T-cell (primary cell): ENCODE measurements at regions of chr6 and their contacts with region 1.

Region 1: GRCh38 chr6:168956884-168957730 is 296.5 kb downstream of the THBS2 start:
- DNase-seq: peak in 29 of 35 experiments; percentile 11 to 59 (median 36)
- ATAC-seq: peak in 2 of 4 experiments; percentile 46 to 51
- H3K4me3 ChIP-seq: no peak overlapping the region
- H3K4me3 Mint-ChIP-seq: no peak overlapping the region
- H3K27ac ChIP-seq: no peak overlapping the region
- H3K27ac Mint-ChIP-seq: no peak overlapping the region
- H3K4me1 ChIP-seq: no peaks in the 10 kb centered on the region
- H3K4me1 Mint-ChIP-seq: no peaks in the 10 kb centered on the region
- H3K27me3 ChIP-seq: peaks cover 0 to 10% of the 10 kb centered on the region in 2 experiments
- H3K27me3 Mint-ChIP-seq: peaks cover 22 to 25% of the 10 kb centered on the region in 2 donors

Region 2: DNA sequence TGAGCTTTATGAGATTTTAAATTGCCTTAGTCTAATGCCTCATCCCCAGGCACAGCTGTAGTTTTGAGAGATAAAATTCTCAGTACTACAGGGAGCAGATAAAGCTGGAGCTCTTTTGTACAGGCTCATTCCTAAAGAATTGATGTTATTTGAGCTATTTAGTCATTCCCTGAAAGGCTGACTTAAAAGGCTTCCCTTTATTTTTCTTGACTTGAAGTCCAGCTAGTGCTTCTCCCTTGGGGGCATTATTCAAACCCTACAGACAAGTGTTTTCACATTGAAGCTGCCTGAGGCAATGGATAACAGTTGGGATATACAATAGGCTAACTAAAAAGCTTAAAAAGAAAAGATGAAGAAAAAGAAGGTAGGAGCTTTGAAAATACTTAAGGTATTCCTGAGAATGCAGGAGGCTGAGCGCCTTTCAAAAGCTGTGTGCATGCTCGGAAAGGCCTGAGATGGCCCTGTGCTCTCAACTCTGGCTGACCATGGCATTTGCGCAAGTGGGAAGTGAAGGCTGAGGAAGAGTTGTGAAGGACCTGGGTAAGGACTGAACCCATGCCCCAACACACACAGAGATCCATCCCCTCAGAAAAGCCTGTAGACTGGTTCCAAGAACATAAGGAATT is 201.0 kb before region 1 on chr6:
- CTCF ChIA-PET with region 1: no interaction called
- POLR2A ChIA-PET with region 1: no interaction called
- DNase-seq: no peak
- ATAC-seq: no peak
- H3K4me3 ChIP-seq: no peak overlapping the region
- H3K4me3 Mint-ChIP-seq: no peak overlapping the region
- H3K27ac ChIP-seq: no peak overlapping the region
- H3K27ac Mint-ChIP-seq: no peak overlapping the region
- H3K4me1 ChIP-seq: no peaks in the 10 kb centered on the region
- H3K4me1 Mint-ChIP-seq: no peaks in the 10 kb centered on the region
- H3K27me3 ChIP-seq: peaks cover 0 to 4% of the 10 kb centered on the region in 2 experiments
- H3K27me3 Mint-ChIP-seq: peaks cover 7 to 18% of the 10 kb centered on the region in 2 donors

Region 3: GRCh38 chr6:169215201-169215681 is 258.1 kb after region 1 on chr6:
- CTCF ChIA-PET with region 1: interaction called in 1 of 2 experiments, 17 read pairs
- POLR2A ChIA-PET with region 1: no interaction called
- DNase-seq: no peak
- ATAC-seq: no peak
- H3K4me3 ChIP-seq: no peak overlapping the region
- H3K4me3 Mint-ChIP-seq: peak overlapping the region in 1 of 3 donors; percentile 21
- H3K27ac ChIP-seq: no peak overlapping the region
- H3K27ac Mint-ChIP-seq: peak overlapping the region; percentile 3 to 23
- H3K4me1 ChIP-seq: peaks cover 5 to 8% of the 10 kb centered on the region in 2 experiments
- H3K4me1 Mint-ChIP-seq: peaks cover 7 to 21% (median 15%) of the 10 kb centered on the region in 3 donors
- H3K27me3 ChIP-seq: no peaks in the 10 kb centered on the region
- H3K27me3 Mint-ChIP-seq: no peaks in the 10 kb centered on the region